Cardiac septum (tissue), 1 donor: ENCODE measurements at regions of chr12 and their contacts with region 1.

Region 1: DNA sequence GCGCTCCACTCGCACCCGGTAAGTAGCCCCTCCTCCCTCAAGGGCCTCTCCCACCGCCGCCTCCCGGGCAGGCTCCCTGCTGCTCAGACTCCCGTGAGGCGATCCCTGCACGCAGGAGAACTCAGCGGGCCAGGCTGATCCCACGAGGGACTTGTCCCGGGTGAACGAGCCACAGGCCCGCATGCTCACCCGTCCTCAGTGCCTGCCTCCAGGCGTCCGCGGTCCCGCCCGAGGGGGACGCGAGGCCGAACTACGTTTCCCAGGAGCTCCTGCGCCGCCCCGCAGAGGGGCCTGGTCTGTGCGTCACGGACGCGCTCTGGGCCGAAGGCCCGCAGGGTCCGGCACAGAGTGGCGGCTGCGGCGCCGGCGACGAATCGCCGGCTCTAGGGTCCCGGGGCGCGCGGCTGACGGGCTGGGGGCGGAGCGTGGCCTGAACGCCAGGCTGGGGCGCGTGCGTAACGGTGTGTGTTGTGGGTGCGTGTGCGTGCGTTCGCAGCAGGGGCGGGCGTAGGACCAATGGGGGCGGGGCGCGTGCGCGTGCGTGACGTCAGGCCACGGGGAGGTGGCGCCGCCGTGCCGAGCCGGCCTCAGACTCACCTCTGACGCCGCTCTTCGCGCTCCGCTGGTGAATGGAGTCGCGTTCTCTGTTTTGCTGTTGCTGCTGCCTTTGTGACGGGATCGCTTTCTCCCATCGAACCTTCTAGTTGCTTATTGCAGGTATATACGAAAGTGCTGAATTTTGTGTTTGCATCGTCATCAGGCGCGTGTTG is at the starts of genes ZNF10 and ZNF891:
- DNase-seq: peak; percentile 98
- total RNA-seq, gene ZNF10: 8.0 TPM
- total RNA-seq, gene ZNF891: 1.1 TPM

Region 2: DNA sequence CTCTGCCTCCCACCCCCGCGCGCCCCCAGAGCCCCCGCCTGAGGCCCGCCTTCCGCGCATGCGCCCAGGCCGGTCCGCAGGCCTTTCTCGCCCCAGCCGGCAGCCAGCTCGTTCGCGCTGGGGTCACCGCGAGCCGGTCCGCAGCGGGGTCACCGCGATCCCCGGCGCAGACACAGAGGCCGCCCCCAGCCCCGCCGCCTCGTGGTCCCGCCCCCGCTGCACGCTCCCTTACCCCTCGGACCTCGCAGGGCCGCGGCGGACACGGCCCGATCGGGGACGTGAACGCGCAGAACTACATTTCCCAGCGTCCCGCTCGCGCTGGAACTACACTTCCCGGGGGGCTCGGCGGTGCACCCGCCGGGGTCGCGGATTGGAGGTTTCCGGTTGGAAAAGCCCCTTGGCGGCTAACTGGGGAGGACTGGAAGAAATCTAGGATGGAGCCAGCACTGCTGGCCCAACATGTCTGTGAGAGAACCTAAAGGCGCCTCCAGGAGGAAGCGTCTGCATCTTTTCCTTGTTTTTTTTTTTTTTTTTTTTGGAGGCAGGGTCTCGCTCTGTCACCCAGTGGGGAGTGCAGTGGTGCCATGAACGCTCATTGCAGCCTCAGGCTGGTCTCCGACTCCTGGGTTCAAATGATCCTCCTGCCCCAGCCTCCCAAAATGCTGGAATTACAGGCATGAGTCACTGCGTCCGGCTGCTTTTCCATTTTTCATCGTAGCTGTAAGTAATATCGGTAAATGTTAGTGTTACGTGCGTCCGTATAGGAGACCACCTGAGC is 174.0 kb before region 1 on chr12 and contains the start of gene ZNF605:
- intact Hi-C with region 1: loop called (anchors 5 kb)
- DNase-seq: peak; percentile 94
- total RNA-seq, gene ZNF605: 12.6 TPM

Region 3: DNA sequence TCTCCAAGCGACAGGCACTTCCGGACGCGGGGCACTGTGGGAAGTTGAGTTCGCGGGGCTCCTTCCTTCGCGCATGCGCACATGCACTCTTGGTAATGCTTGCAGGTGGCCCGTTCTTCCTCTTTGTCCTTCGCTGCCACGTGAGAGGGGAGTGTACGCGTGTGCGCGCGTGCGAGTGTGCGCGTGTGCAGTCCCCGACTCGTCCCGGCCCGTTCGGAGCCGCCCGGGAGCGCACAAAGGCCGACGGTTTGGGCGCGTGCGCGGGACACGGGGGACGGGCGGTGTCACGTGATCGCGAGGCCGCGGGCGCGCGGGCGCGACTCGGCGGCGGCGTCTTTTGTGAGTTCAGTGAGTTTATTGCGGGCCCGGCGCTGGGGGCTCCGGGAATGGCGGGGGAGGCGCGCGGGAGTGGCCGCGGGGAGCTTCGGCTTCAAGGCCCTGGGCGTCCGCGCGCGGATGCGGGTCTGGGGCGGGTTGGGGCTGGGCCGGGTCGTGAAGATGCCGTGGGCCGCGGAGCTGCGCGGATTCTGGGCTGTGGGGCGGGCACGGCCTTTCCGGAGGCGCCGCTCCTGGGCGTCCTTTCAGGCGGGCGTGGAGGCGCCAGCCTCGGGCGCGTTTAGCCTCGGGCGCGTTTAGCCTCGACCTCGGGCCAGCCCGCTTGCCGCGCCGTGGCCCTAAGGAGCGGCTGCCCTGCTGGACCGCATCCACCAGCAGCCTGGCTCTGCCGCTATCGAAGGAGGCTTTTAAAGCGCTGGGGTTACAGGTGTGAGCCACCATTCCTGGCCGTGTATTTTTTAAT is 92.8 kb before region 1 on chr12 and contains the start of gene ZNF84:
- intact Hi-C with region 1: loop called (anchors 1 kb)
- DNase-seq: peak; percentile 98
- total RNA-seq, gene ZNF84: 19.1 TPM

Region 4: DNA sequence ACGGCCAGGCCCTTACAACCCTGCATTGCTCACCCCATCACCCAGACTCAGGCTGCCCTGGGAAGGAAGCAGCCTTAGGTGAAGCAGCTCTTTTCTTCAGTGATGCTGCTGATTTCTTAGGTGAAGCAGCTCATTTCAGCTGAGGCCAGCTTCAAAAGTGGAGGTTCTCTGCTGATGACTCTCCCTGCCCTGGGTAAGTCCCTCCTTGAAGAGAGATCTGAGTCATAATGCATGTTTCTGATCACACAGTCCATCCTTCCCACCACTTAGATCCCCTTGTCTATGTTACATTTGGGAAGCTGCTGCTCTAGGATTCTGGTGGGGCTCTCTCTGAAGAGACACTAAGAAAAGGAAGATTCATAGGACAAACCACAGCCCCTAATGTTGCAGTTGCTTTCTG is 66.7 kb before region 1 on chr12:
- intact Hi-C with region 1: no loop called
- DNase-seq: no peak

Region 5: DNA sequence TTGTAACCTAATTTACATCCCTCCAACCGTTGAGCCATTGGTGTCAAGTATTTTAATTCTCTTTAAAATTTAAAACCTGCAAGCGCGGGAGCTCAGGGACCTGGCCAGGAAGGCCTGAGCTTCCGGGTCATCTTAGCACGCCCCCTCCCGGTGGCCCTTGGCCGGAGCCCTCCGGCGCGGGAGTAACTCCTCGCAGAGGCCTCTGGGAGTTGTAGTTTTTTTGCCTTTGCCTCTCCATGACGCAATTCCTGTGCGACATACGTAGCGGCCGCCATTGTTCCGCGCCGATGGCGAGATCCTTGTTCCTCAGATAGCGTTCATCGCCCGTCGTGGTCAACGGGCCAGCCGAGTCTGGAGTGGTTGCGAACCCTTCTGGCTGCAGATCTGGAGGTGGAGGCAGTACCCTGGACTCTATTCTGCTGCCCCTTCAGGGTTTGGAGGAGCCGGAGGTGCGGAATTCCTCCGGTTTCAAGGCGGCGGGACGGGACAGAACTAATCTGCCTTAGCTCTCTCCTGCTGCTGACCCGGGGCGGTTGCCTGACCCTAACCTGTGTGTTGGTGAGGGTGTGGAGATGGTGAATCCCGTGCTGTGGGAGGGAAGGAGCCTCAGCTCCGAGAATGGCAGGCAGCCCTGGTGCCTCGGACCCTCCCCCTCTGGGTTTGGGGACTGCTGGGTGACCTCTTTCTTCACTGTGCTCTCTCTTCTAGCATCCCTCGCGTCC is 51.2 kb after region 1 on chr12 and contains the start of gene ZNF268:
- intact Hi-C with region 1: loop called (anchors 2 kb)
- DNase-seq: peak; percentile 92
- total RNA-seq, gene ZNF268: 10.4 TPM